CD8-positive, alpha-beta memory T cell (primary cell): ENCODE measurements at regions of chr3 and their contacts with region 1.

Region 1: DNA sequence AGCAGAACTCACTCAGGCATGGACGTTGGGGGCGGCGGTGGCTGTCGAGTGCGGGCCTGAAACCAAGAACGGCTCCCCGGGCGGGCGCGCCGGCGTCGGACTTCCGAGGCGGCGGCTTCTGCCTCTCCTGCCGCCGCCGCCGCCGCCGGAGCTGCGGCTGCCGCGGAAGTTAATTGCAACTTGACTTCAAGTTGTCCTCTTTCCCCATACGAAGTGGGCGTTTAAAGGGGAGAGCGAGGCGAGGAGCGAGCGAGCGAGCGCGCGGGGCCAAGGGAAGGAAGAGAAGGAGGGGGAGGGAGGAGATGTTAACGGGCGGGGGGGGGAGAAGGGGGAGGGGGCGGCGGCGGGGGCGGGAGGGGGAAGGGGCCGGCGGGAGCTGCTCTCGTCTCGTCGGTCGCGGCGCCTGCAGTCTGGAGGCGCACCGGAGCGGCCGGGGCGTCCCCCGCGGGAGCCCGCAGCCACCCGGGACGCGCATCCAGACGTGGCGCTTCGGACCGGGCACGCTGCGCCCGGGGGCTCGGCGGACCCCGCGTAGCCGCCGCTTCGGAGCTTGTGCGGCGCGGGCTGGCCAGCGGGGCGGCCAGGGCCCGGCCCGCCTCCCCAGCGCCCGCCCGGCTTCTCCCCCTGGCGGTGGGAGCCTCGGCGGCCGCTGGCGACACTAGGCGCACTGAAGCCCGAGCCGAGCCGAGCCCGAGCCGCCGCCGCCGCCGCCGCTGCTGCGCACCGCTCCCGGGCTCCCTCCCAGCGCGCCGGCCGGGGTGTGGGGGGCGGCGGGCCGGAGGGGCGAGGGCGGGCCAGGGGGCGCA is 19.7 kb upstream of the SATB1 start:
- DNase-seq: peak; percentile 62 to 92 (median 83)
- H3K4me3 ChIP-seq: peak overlapping the region; percentile 97
- H3K4me3 Mint-ChIP-seq: peak overlapping the region; percentile 93 to 99 (median 98)
- H3K27ac ChIP-seq: peak overlapping the region; percentile 78
- H3K27ac Mint-ChIP-seq: peak overlapping the region; percentile 79 to 98 (median 94)
- H3K4me1 ChIP-seq: peaks cover 25% of the 10 kb centered on the region
- H3K4me1 Mint-ChIP-seq: peaks cover 42 to 59% (median 52%) of the 10 kb centered on the region in 3 donors
- H3K27me3 ChIP-seq: no peaks in the 10 kb centered on the region
- H3K27me3 Mint-ChIP-seq: peaks cover 0 to 2% of the 10 kb centered on the region in 2 donors

Region 2: GRCh38 chr3:18424729-18425640 is 19.8 kb before region 1 on chr3 and contains the start of gene SATB1:
- CTCF ChIA-PET with region 1: interaction called, 3 read pairs
- POLR2A ChIA-PET with region 1: interaction called, 14 read pairs
- DNase-seq: peak; percentile 49 to 77 (median 66)
- H3K4me3 ChIP-seq: peak within 1 kb of the TSS; percentile 80
- H3K4me3 Mint-ChIP-seq: peak within 1 kb of the TSS; percentile 87 to 99 (median 93)
- H3K27ac ChIP-seq: peak within 1 kb of the TSS; percentile 58
- H3K27ac Mint-ChIP-seq: peak within 1 kb of the TSS; percentile 87 to 99 (median 96)
- H3K4me1 ChIP-seq: peaks cover 53% of the 10 kb centered on the region
- H3K4me1 Mint-ChIP-seq: peaks cover 68 to 84% (median 78%) of the 10 kb centered on the region in 3 donors
- H3K27me3 ChIP-seq: no peaks in the 10 kb centered on the region
- H3K27me3 Mint-ChIP-seq: peaks cover 0 to 4% of the 10 kb centered on the region in 2 donors
- total RNA-seq, gene SATB1: 158 to 163 TPM

Region 3: GRCh38 chr3:18469775-18470174 is 25.0 kb after region 1 on chr3:
- CTCF ChIA-PET with region 1: no interaction called
- POLR2A ChIA-PET with region 1: no interaction called
- DNase-seq: no peak
- H3K4me3 ChIP-seq: no peak overlapping the region
- H3K4me3 Mint-ChIP-seq: no peak overlapping the region
- H3K27ac ChIP-seq: no peak overlapping the region
- H3K27ac Mint-ChIP-seq: peak overlapping the region in 1 of 8 donors; percentile 47
- H3K4me1 ChIP-seq: no peaks in the 10 kb centered on the region
- H3K4me1 Mint-ChIP-seq: peaks cover 0 to 5% (median 0%) of the 10 kb centered on the region in 3 donors
- H3K27me3 ChIP-seq: no peaks in the 10 kb centered on the region
- H3K27me3 Mint-ChIP-seq: peaks cover 0 to 2% of the 10 kb centered on the region in 2 donors

Region 4: DNA sequence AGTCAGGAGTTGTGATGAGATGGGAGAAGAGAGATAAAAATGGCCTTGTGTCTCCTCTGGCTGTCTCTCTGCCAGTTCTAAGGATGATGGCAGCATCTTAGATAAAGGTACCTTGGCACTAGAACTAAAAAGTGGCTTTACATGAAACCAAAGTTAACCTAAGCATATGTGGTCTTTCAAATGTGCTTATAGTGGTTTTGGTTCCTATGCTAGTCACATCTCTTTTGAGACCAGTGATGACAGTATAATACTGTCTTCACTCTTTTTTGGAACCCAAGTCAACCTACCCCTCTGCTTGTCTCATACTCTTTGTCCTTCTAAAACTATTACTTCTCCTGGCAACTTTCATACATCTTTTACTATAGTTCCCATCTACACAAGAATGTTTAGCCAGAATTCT is 122.5 kb after region 1 on chr3:
- CTCF ChIA-PET with region 1: no interaction called
- POLR2A ChIA-PET with region 1: no interaction called
- DNase-seq: no peak
- H3K4me3 ChIP-seq: no peak overlapping the region
- H3K4me3 Mint-ChIP-seq: no peak overlapping the region
- H3K27ac ChIP-seq: no peak overlapping the region
- H3K27ac Mint-ChIP-seq: no peak overlapping the region
- H3K4me1 ChIP-seq: peaks cover 12% of the 10 kb centered on the region
- H3K4me1 Mint-ChIP-seq: peaks cover 10 to 12% (median 10%) of the 10 kb centered on the region in 3 donors
- H3K27me3 ChIP-seq: no peaks in the 10 kb centered on the region
- H3K27me3 Mint-ChIP-seq: no peaks in the 10 kb centered on the region